ENCODE measurements at regions of chr13 and their contacts with region 1.

Region 1: GRCh38 chr13:52128714-52129700 is at the start of gene NEK5:
- DNase-seq: peak in 9 of 10 donors; percentile 16 to 73 (median 51)
- H3K4me3 ChIP-seq: peak within 1 kb of the TSS; percentile 56 to 95 (median 76)
- H3K27ac ChIP-seq: peak within 1 kb of the TSS in 16 of 59 donors; percentile 5 to 68 (median 49)
- H3K27me3 ChIP-seq: no peaks in the 10 kb centered on the region
- CTCF ChIP-seq: peak in 55 of 56 donors; percentile 45 to 85 (median 68)
- total RNA-seq, gene NEK5: 0.60 to 4.5 (median 1.5) TPM

Region 2: DNA sequence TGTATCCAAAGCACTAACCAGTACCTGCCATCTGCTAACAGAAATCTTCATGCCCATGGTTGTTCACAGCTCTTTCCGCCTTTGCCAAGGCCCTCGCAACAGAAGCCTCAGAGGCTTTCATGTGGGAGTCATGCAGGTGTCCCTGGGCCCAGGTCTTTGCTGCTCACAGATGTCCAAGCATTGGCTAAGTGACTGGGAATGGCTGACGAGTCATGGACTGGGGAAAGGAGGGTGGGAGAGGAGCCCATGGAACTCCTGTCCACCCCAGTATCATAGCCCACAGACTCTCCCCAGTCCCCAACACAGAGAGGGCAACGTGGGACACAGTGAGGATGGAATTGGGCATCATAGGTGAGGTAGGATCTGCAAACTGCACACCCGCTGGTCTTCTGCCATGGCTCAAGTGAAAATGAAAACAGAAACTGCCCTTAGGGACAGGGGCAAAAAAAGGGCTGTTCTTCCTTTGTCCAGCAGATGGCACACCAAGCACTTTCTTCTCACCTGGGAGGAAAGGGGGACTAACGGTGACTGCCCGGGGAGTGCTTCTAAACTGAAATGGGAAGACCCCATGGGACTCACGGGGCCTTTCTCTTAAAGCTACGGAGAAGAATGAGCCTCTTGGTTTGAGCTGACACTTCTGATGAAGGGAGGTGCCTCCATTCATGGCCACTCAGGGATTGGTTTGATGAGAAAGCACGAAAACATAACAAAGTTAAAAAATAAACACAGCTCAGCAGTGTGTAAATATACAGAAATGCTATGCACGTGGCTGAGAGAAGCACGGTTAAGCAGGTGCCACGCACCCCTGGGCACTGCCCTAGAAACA is 314.0 kb before region 1 on chr13:
- intact Hi-C with region 1: loop called (anchors 5 to 10 kb)
- DNase-seq: peak in 4 of 10 donors; percentile 28 to 57 (median 52)
- H3K4me3 ChIP-seq: peak overlapping the region in 39 of 59 donors; percentile 3 to 48 (median 26)
- H3K27ac ChIP-seq: peak overlapping the region in 2 of 59 donors; percentile 10 to 46
- H3K27me3 ChIP-seq: no peaks in the 10 kb centered on the region
- CTCF ChIP-seq: peak; percentile 67 to 92 (median 83)

Region 3: GRCh38 chr13:51911860-51912510 is 217.0 kb before region 1 on chr13:
- intact Hi-C with region 1: loop called in 1 of 2 experiments (anchors 5 kb)
- DNase-seq: peak; percentile 44 to 81 (median 72)
- H3K4me3 ChIP-seq: peak overlapping the region in 41 of 59 donors; percentile 0 to 51 (median 31)
- H3K27ac ChIP-seq: peak overlapping the region in 22 of 59 donors; percentile 0 to 58 (median 32)
- H3K27me3 ChIP-seq: no peaks in the 10 kb centered on the region
- CTCF ChIP-seq: peak in 47 of 56 donors; percentile 19 to 71 (median 43)

Region 4: DNA sequence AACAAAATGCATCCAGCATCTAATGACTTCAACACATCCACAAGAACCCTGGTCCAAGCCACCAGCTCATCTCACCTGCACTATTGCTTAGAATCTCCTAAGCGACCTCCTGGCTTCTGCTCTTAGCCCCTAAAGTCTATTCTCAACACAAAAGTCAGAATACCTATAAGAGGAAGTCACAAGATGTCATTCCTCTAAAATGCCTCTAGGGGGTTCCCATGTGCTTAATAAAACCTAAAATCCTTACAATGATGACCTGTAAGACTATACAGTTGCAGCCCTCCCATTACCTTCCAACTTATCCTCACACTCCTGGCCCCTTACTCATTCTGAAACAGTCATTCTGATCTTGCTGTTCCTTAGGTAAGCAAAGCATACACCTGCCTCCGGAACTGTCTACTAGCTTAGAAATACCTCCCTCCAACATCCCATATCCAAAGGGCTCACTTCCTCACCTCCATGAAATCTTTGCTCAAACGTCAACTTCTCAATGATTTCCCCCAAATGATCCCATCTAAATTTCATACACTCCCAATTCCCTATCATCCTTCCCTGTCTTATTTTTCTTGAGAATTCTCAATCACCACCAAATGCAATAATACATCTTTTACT is 127.8 kb before region 1 on chr13:
- intact Hi-C with region 1: loop called (anchors 5 kb)
- DNase-seq: no peak
- H3K4me3 ChIP-seq: no peak overlapping the region
- H3K27ac ChIP-seq: no peak overlapping the region
- H3K27me3 ChIP-seq: no peaks in the 10 kb centered on the region
- CTCF ChIP-seq: peak; percentile 43 to 82 (median 72)

Region 5: GRCh38 chr13:52194184-52194868 is 65.3 kb after region 1 on chr13:
- intact Hi-C with region 1: loop called (anchors 2 kb)
- DNase-seq: peak; percentile 79 to 92 (median 85)
- H3K4me3 ChIP-seq: peak overlapping the region; percentile 57 to 98 (median 88)
- H3K27ac ChIP-seq: peak overlapping the region; percentile 63 to 96 (median 92)
- H3K27me3 ChIP-seq: no peaks in the 10 kb centered on the region
- CTCF ChIP-seq: peak in 52 of 56 donors; percentile 11 to 67 (median 44)

Region 6: GRCh38 chr13:52925775-52926285 is 796.8 kb after region 1 on chr13:
- intact Hi-C with region 1: no loop called
- DNase-seq: no peak
- H3K4me3 ChIP-seq: no peak overlapping the region
- H3K27ac ChIP-seq: no peak overlapping the region
- H3K27me3 ChIP-seq: no peaks in the 10 kb centered on the region
- CTCF ChIP-seq: no peak

Measured in dorsolateral prefrontal cortex (tissue), 120 donors.